ENCODE measurements at regions of chr3 and their contacts with region 1.

Region 1: GRCh38 chr3:12967606-12968351 is 105.5 kb downstream of the IQSEC1 start:
- DNase-seq: peak; percentile 83
- H3K4me3 Mint-ChIP-seq: peak overlapping the region; percentile 64
- H3K27ac Mint-ChIP-seq: peak overlapping the region; percentile 4
- H3K4me1 Mint-ChIP-seq: peaks cover 51% of the 10 kb centered on the region
- H3K27me3 Mint-ChIP-seq: no peaks in the 10 kb centered on the region

Region 2: DNA sequence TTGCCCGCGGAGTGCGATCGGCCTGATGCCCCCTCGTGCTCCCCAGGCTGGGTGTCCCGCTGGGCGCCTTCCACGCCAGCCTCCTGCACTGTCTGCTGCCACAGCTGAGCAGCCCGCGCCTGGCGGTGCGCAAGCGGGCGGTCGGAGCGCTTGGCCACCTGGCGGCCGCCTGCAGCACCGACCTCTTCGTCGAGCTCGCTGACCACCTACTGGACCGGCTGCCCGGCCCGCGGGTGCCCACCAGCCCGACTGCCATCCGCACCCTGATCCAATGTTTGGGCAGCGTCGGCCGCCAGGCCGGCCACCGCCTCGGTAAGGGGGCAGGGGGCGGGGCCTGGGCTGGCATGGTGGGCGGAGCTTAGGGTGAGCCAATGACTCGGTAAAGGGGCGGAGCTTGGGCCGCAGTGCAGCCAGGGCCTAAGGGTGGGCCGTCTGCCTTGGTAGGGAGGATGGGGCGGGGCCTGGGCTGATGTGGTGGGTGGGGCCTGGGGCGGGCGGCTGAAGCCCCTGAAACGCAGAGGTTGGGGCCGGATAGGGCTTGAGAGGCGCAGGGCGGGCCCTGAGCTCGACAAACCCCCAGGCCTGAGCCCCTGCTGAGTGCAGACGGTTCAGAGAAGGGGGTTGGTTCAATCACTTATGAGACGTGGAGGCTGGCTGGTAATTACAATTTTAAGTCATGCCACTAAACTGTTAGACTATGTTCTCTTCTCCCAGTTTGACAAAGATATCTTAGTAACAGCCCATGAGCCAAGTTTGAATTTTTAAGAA is 157.6 kb before region 1 on chr3:
- intact Hi-C with region 1: loop called (anchors 1 kb)
- DNase-seq: peak; percentile 86
- H3K4me3 Mint-ChIP-seq: peak overlapping the region; percentile 26
- H3K27ac Mint-ChIP-seq: no peak overlapping the region
- H3K4me1 Mint-ChIP-seq: peaks cover 5% of the 10 kb centered on the region
- H3K27me3 Mint-ChIP-seq: peaks cover 6% of the 10 kb centered on the region

Region 3: GRCh38 chr3:12916159-12916558 is 51.6 kb before region 1 on chr3:
- intact Hi-C with region 1: loop called (anchors 5 kb)
- DNase-seq: peak; percentile 40
- H3K4me3 Mint-ChIP-seq: no peak overlapping the region
- H3K27ac Mint-ChIP-seq: no peak overlapping the region
- H3K4me1 Mint-ChIP-seq: peaks cover 23% of the 10 kb centered on the region
- H3K27me3 Mint-ChIP-seq: no peaks in the 10 kb centered on the region

Region 4: GRCh38 chr3:12994607-12995388 is 27.0 kb after region 1 on chr3:
- intact Hi-C with region 1: loop called (anchors 1 kb)
- DNase-seq: peak; percentile 82
- H3K4me3 Mint-ChIP-seq: peak overlapping the region; percentile 83
- H3K27ac Mint-ChIP-seq: peak overlapping the region; percentile 81
- H3K4me1 Mint-ChIP-seq: peaks cover 30% of the 10 kb centered on the region
- H3K27me3 Mint-ChIP-seq: peaks cover 2% of the 10 kb centered on the region

Region 5: DNA sequence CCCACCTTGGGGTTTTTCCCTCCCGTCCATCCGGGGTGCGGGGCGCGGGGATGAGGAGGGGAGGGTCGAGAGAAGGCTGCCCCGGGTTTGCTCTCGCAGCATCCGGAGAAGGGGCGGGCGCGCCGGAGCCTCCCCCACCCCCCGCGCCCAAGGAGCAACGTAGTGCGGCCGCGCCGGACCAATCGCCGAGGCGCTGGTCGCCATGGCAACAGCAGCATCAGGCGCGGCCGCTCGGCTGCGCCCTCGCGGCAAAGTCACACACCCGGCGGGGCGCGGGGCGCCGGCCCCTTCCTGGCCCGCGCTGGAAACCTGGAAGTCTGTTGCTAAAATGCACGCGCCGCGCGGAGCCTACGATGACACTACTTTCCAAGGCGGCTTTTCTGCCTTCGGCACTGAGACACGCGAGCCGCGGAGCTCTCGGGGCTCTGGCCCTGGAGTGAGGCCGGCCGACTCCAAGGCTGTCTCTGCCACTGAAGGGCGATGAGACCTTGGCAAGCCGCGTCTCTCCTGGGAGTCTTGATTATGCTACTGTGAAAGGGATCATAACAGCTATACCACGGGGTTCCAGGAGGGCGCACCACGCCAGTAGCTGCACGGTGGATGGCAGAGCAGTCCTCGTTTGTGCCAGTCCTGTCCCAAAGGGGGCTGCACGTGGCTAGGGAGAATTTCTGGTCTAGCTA is 105.7 kb after region 1 on chr3 and contains the start of gene IQSEC1:
- intact Hi-C with region 1: loop called (anchors 5 kb)
- DNase-seq: peak; percentile 71
- H3K4me3 Mint-ChIP-seq: peak within 1 kb of the TSS; percentile 84
- H3K27ac Mint-ChIP-seq: peak within 1 kb of the TSS; percentile 68
- H3K4me1 Mint-ChIP-seq: peaks cover 28% of the 10 kb centered on the region
- H3K27me3 Mint-ChIP-seq: peaks cover 33% of the 10 kb centered on the region
- total RNA-seq, gene IQSEC1: 24.9 and 31.4 TPM in 2 replicates